Heart left ventricle (tissue), 16 donors: ENCODE measurements at regions of chr2 and their contacts with region 1.

Region 1: GRCh38 chr2:64653349-64654062 is at the start of gene SERTAD2:
- DNase-seq: peak; percentile 91 to 96 (median 93)
- ATAC-seq: peak; percentile 75 to 93 (median 91)
- H3K4me3 ChIP-seq: peak within 1 kb of the TSS; percentile 74 to 95 (median 90)
- H3K27ac ChIP-seq: peak within 1 kb of the TSS; percentile 96 to 100 (median 99)
- H3K4me1 ChIP-seq: peaks cover 0 to 69% (median 41%) of the 10 kb centered on the region in 12 donors
- H3K27me3 ChIP-seq: no peaks in the 10 kb centered on the region
- CTCF ChIP-seq: peak in 5 of 12 donors; percentile 7 to 34 (median 16)
- POLR2A ChIP-seq: peak in 1 of 2 donors; percentile 79
- total RNA-seq, gene SERTAD2: 12.2 to 21.6 (median 16.1) TPM

Region 2: GRCh38 chr2:64586883-64587481 is 66.5 kb before region 1 on chr2:
- intact Hi-C with region 1: loop called in 3 of 10 experiments (anchors 5 to 10 kb)
- DNase-seq: no peak
- ATAC-seq: peak in 3 of 4 donors; percentile 64 to 70 (median 66)
- H3K4me3 ChIP-seq: no peak overlapping the region
- H3K27ac ChIP-seq: peak overlapping the region in 1 of 12 donors; percentile 17
- H3K4me1 ChIP-seq: peaks cover 0 to 11% (median 0%) of the 10 kb centered on the region in 12 donors
- H3K27me3 ChIP-seq: no peaks in the 10 kb centered on the region
- CTCF ChIP-seq: peak; percentile 40 to 78 (median 69)
- POLR2A ChIP-seq: no peak

Region 3: GRCh38 chr2:64750817-64751285 is 97.3 kb after region 1 on chr2:
- intact Hi-C with region 1: loop called (anchors 1 to 5 kb)
- DNase-seq: peak; percentile 99 to 100 (median 100)
- ATAC-seq: peak; percentile 92 to 95 (median 94)
- H3K4me3 ChIP-seq: peak overlapping the region; percentile 50 to 88 (median 78)
- H3K27ac ChIP-seq: peak overlapping the region; percentile 74 to 99 (median 97)
- H3K4me1 ChIP-seq: peaks cover 0 to 30% (median 16%) of the 10 kb centered on the region in 12 donors
- H3K27me3 ChIP-seq: no peaks in the 10 kb centered on the region
- CTCF ChIP-seq: peak in 4 of 12 donors; percentile 15 to 46 (median 23)
- POLR2A ChIP-seq: peak; percentile 85 to 99

Region 4: GRCh38 chr2:64831134-64831976 is 177.8 kb after region 1 on chr2:
- intact Hi-C with region 1: loop called in 6 of 10 experiments (anchors 1 to 10 kb)
- DNase-seq: peak; percentile 77 to 93 (median 88)
- ATAC-seq: peak; percentile 79 to 98 (median 97)
- H3K4me3 ChIP-seq: peak overlapping the region in 3 of 12 donors; percentile 2 to 37 (median 9)
- H3K27ac ChIP-seq: peak overlapping the region in 11 of 12 donors; percentile 31 to 90 (median 72)
- H3K4me1 ChIP-seq: peaks cover 0 to 18% (median 10%) of the 10 kb centered on the region in 12 donors
- H3K27me3 ChIP-seq: no peaks in the 10 kb centered on the region
- CTCF ChIP-seq: peak; percentile 83 to 95 (median 88)
- POLR2A ChIP-seq: no peak

Region 5: GRCh38 chr2:64865073-64865830 is 211.7 kb after region 1 on chr2:
- intact Hi-C with region 1: loop called in 4 of 10 experiments (anchors 2 to 5 kb)
- DNase-seq: peak; percentile 68 to 82 (median 71)
- ATAC-seq: peak; percentile 62 to 90 (median 80)
- H3K4me3 ChIP-seq: peak overlapping the region; percentile 47 to 88 (median 82)
- H3K27ac ChIP-seq: peak overlapping the region; percentile 77 to 94 (median 90)
- H3K4me1 ChIP-seq: peaks cover 0 to 58% (median 6%) of the 10 kb centered on the region in 12 donors
- H3K27me3 ChIP-seq: no peaks in the 10 kb centered on the region
- CTCF ChIP-seq: peak; percentile 28 to 100 (median 81)
- POLR2A ChIP-seq: no peak